CD8-positive, alpha-beta T cell (primary cell): ENCODE measurements at regions of chr11 and their contacts with region 1.

Region 1: GRCh38 chr11:38990161-38990560 is 2392.1 kb upstream of the RAG2 start:
- DNase-seq: no peak
- ATAC-seq: no peak
- H3K4me3 ChIP-seq: no peak overlapping the region
- H3K4me3 Mint-ChIP-seq: no peak overlapping the region
- H3K27ac ChIP-seq: no peak overlapping the region
- H3K27ac Mint-ChIP-seq: no peak overlapping the region
- H3K4me1 ChIP-seq: no peaks in the 10 kb centered on the region
- H3K4me1 Mint-ChIP-seq: no peaks in the 10 kb centered on the region
- H3K27me3 ChIP-seq: no peaks in the 10 kb centered on the region
- H3K27me3 Mint-ChIP-seq: no peaks in the 10 kb centered on the region
- CTCF ChIP-seq: no peak

Region 2: GRCh38 chr11:38948392-38948791 is 41.8 kb before region 1 on chr11:
- CTCF ChIA-PET with region 1: no interaction called
- POLR2A ChIA-PET with region 1: no interaction called
- intact Hi-C with region 1: loop called in 1 of 2 experiments (anchors 1 kb)
- DNase-seq: no peak
- ATAC-seq: no peak
- H3K4me3 ChIP-seq: no peak overlapping the region
- H3K4me3 Mint-ChIP-seq: no peak overlapping the region
- H3K27ac ChIP-seq: no peak overlapping the region
- H3K27ac Mint-ChIP-seq: no peak overlapping the region
- H3K4me1 ChIP-seq: no peaks in the 10 kb centered on the region
- H3K4me1 Mint-ChIP-seq: no peaks in the 10 kb centered on the region
- H3K27me3 ChIP-seq: no peaks in the 10 kb centered on the region
- H3K27me3 Mint-ChIP-seq: no peaks in the 10 kb centered on the region
- CTCF ChIP-seq: no peak